Naive thymus-derived CD4-positive, alpha-beta T cell (primary cell): ENCODE measurements at regions of chr1 and their contacts with region 1.

Region 1: GRCh38 chr1:192516776-192517297 is 58.7 kb upstream of the RGS1 start:
- DNase-seq: peak in 8 of 9 donors; percentile 46 to 91 (median 87)
- ATAC-seq: peak; percentile 96
- H3K4me3 ChIP-seq: peak overlapping the region; percentile 27
- H3K4me3 Mint-ChIP-seq: peak overlapping the region; percentile 42 to 86 (median 78)
- H3K27ac ChIP-seq: peak overlapping the region; percentile 60
- H3K27ac Mint-ChIP-seq: peak overlapping the region; percentile 77 to 98 (median 93)
- H3K4me1 ChIP-seq: peaks cover 18 to 21% of the 10 kb centered on the region in 2 donors
- H3K4me1 Mint-ChIP-seq: peaks cover 32 to 56% (median 44%) of the 10 kb centered on the region in 7 donors
- H3K27me3 ChIP-seq: no peaks in the 10 kb centered on the region
- H3K27me3 Mint-ChIP-seq: no peaks in the 10 kb centered on the region

Region 2: DNA sequence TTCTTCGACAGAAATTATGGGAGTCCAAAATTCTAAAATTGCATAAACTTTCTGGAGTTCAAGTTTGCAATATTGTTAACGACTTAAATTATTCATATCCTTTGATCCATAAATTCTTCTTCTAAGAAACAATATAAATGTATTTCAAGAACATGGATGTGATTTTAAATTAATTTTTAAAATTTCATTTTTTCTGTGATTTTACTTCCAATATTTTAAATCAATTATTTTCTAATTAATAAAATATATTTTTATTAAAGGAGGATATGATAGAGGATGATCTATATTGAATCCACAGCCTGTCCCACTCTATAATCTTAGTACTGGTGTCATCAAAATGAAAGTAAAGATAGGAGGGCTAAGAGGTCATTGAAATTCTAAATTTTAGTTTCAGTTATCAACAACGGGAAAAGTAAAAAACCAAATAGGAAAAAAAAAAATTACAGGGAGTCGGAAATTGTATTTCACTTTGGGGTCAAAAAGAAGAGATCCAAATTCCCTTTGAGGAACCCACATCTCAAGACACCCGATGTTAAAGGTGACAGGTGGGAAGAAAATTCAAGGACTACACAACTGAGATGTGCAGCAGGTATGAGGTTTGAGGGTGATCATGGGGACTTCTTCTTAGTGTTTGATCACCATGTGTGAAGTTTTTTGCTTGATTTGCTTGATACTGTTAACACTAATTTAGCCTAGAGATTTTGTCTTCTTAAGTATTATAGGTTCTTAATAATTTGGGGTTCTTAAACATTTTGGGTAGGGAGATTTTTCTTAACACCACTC is 513.4 kb before region 1 on chr1:
- CTCF ChIA-PET with region 1: no interaction called
- POLR2A ChIA-PET with region 1: no interaction called
- intact Hi-C with region 1: no loop called
- DNase-seq: peak in 1 of 9 donors; percentile 7
- ATAC-seq: no peak
- H3K4me3 ChIP-seq: no peak overlapping the region
- H3K4me3 Mint-ChIP-seq: no peak overlapping the region
- H3K27ac ChIP-seq: no peak overlapping the region
- H3K27ac Mint-ChIP-seq: no peak overlapping the region
- H3K4me1 ChIP-seq: no peaks in the 10 kb centered on the region
- H3K4me1 Mint-ChIP-seq: no peaks in the 10 kb centered on the region
- H3K27me3 ChIP-seq: no peaks in the 10 kb centered on the region
- H3K27me3 Mint-ChIP-seq: no peaks in the 10 kb centered on the region

Region 3: GRCh38 chr1:192477630-192478029 is 39.2 kb before region 1 on chr1:
- CTCF ChIA-PET with region 1: interaction called, 6 read pairs
- POLR2A ChIA-PET with region 1: no interaction called
- intact Hi-C with region 1: loop called (anchors 1 to 2 kb)
- DNase-seq: peak in 6 of 9 donors; percentile 20 to 59 (median 38)
- ATAC-seq: peak; percentile 75
- H3K4me3 ChIP-seq: no peak overlapping the region
- H3K4me3 Mint-ChIP-seq: no peak overlapping the region
- H3K27ac ChIP-seq: no peak overlapping the region
- H3K27ac Mint-ChIP-seq: no peak overlapping the region
- H3K4me1 ChIP-seq: no peaks in the 10 kb centered on the region
- H3K4me1 Mint-ChIP-seq: no peaks in the 10 kb centered on the region
- H3K27me3 ChIP-seq: no peaks in the 10 kb centered on the region
- H3K27me3 Mint-ChIP-seq: peaks cover 0 to 16% (median 0%) of the 10 kb centered on the region in 5 donors

Region 4: DNA sequence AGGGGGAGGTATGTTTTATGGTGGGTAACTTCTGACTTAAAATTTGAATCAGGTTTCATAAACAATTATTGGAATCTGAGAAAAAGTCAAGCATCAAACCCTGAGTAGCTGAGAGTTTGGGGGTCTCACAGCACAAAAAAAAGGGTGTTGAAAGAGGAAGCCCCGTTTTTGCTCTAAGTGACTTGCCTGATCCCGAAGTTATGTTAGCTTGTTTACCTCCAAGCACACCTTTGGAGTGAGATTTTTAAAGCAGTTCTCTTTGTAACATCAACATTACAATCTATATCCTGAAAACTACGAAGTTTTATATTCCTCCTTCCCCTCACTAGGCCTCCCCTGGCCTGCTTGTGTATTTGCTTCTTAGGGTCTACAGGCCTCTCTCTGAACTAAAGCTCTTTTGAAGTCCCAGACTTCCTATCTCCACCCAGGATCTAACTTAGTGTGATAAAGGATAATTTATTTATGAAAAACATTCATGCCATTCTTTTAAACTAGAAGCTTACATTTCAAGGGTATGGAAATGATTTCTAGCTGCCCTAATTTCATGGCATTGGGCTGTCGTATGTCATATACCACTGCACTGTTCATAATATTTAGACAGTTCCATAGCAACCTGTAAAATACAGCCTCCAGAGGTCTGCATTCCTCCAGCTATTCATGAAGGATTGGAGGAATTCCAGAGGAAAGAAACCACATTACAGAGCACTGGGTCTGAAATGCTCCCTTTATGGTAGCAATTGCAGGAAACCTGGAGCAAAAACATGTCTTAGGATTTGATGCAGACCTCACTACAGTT is 22.7 kb after region 1 on chr1:
- CTCF ChIA-PET with region 1: interaction called, 7 read pairs
- POLR2A ChIA-PET with region 1: no interaction called
- intact Hi-C with region 1: loop called (anchors 1 kb)
- DNase-seq: peak in 4 of 9 donors; percentile 4 to 22 (median 6)
- ATAC-seq: peak; percentile 37
- H3K4me3 ChIP-seq: peak overlapping the region; percentile 8
- H3K4me3 Mint-ChIP-seq: peak overlapping the region; percentile 12 to 88 (median 56)
- H3K27ac ChIP-seq: peak overlapping the region; percentile 47
- H3K27ac Mint-ChIP-seq: peak overlapping the region; percentile 80 to 97 (median 89)
- H3K4me1 ChIP-seq: peaks cover 10 to 29% of the 10 kb centered on the region in 2 donors
- H3K4me1 Mint-ChIP-seq: peaks cover 15 to 57% (median 29%) of the 10 kb centered on the region in 7 donors
- H3K27me3 ChIP-seq: no peaks in the 10 kb centered on the region
- H3K27me3 Mint-ChIP-seq: no peaks in the 10 kb centered on the region

Region 5: DNA sequence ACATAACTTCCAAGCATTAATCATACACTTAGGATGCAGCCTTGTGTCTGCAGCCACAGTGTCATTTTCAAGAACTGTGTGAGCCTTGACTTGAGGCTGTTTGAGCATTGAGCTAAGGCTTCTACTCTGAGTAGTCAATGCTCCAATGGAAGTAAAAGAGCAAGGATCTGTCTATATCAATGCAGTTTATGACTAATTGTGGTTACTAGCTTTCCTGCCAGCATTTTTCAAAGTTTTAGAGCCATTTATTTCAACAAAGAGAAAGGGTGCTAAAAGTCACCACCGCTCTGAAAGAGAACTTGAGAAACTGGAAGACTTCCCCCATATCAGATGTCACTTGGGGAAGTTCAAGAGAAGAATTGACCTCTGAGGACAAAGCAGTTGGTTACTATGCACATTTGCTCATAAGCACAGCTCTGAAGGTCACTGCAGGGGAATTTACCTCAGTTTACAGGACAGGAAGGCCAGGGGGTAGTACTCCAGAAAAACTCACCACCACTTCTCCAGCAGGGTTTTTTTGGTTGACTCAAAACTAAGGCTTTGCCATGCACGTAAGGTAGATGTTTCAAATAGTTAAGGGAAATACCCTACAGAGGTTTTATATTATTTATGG is 34.2 kb after region 1 on chr1:
- CTCF ChIA-PET with region 1: no interaction called
- POLR2A ChIA-PET with region 1: no interaction called
- intact Hi-C with region 1: loop called in 1 of 2 experiments (anchors 5 kb)
- DNase-seq: no peak
- ATAC-seq: peak; percentile 68
- H3K4me3 ChIP-seq: no peak overlapping the region
- H3K4me3 Mint-ChIP-seq: peak overlapping the region in 1 of 10 donors; percentile 34
- H3K27ac ChIP-seq: no peak overlapping the region
- H3K27ac Mint-ChIP-seq: peak overlapping the region in 3 of 9 donors; percentile 25 to 78 (median 38)
- H3K4me1 ChIP-seq: peaks cover 0 to 42% of the 10 kb centered on the region in 2 donors
- H3K4me1 Mint-ChIP-seq: peaks cover 8 to 46% (median 15%) of the 10 kb centered on the region in 7 donors
- H3K27me3 ChIP-seq: no peaks in the 10 kb centered on the region
- H3K27me3 Mint-ChIP-seq: peaks cover 0 to 6% (median 0%) of the 10 kb centered on the region in 5 donors

Region 6: DNA sequence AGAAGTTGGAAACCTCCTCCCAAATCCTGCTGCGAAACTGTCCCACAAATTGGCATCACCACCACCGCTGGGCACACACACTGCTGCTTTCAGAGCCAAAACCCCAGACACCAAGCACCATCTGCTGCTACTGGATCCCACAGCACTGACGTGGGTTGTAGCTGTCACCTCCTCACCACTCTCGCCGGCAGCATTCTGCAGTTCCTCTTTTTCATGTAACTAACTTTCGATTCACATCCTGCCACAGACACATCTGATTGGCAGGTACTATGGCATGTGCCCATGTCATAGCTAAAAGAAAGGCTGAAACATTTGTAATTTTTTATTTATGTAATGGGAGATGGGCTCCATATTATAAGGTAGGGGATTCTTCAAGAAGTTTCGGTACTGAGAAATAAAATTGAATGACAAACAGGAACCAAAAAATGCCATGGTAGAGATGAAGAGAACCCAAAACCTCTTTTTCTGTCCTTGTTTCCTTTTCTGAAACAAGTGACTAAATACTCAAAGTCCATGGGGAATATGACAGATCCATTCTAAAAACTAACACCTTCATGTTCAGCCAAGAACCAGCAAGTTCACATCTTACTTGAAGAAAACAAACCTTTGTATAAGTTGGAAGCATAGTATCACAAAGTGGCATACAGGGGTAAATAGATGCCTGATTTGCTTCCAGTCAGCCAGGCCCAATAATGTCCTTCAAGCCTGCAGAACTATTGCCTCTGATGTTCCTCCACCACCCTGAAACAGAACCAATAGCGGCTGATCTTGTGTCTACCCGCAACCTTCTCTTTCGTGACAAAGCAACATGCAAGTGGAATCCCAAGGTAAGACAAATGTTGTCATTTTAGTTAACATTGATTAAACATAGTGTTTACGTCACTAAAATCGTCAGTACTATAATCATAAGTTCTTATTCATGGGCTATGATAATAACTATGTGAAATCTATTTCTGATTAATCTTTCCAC is 92.6 kb after region 1 on chr1:
- CTCF ChIA-PET with region 1: no interaction called
- POLR2A ChIA-PET with region 1: interaction called, 4 read pairs
- intact Hi-C with region 1: loop called (anchors 1 to 5 kb)
- DNase-seq: peak; percentile 30 to 80 (median 69)
- ATAC-seq: peak; percentile 96
- H3K4me3 ChIP-seq: peak overlapping the region; percentile 3
- H3K4me3 Mint-ChIP-seq: peak overlapping the region; percentile 52 to 81 (median 65)
- H3K27ac ChIP-seq: peak overlapping the region; percentile 14
- H3K27ac Mint-ChIP-seq: peak overlapping the region; percentile 54 to 91 (median 86)
- H3K4me1 ChIP-seq: peaks cover 10 to 14% of the 10 kb centered on the region in 2 donors
- H3K4me1 Mint-ChIP-seq: peaks cover 12 to 16% (median 15%) of the 10 kb centered on the region in 7 donors
- H3K27me3 ChIP-seq: no peaks in the 10 kb centered on the region
- H3K27me3 Mint-ChIP-seq: peaks cover 0 to 2% (median 0%) of the 10 kb centered on the region in 5 donors